Activated T-helper 1 cell treated with anti-CD3 and anti-CD28 coated beads, Interleukin-12 subunit alpha, Interleukin-12 subunit beta, Interleukin-2, Interleukin-4 antibody, amounts not matched to agents 30 ng/mL and 10 ng/mL and 1 ng/mL, durations not matched to agents 14 hours and 24 hours and 36 hours (primary cell): ENCODE measurements at regions of chr3 and their contacts with region 1.

Region 1: DNA sequence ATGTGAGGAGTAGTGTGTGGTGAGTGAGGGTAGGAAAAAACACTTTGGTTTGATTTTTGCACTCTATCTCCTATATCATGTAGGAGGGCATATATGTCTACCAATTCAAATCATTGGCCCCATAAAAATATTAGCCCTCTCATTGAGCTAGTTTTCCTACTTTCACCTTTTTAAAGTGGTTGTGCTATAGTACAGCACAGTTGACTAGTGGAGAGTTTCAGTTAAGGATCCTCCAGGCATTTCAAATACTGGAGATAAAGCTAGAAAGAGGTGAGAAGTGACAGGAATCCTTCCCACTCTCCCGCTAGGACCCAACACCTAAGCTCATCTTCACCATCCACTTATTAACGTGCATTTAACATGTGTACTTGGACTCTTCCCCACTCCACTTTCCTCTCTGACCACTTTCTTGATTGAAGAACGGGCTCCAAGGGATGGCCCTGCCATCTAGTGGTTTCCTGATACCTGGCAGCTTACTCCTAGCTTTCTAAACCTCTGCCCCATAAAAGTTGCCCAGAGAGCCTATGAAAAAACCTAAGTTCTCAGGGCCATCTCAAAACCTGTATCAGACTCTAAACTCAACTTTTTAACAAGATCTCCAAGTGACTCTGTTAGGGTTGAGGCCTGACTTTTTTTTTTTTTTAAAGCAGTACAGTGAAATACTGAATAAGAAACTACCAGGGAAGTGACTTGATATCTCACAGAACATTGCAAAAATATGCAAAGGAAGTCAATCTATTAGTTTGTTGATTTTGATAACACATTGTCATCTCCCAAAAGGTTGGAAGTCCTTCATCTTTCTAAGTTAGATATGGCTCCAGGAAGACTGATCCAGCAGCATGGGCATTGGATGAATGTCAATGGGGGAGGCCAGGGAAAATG is 17.9 kb downstream of the IL12A start:
- DNase-seq: no peak
- H3K4me3 Mint-ChIP-seq: no peak overlapping the region
- H3K27ac Mint-ChIP-seq: no peak overlapping the region
- H3K4me1 Mint-ChIP-seq: peaks cover 42% of the 10 kb centered on the region
- H3K27me3 Mint-ChIP-seq: no peaks in the 10 kb centered on the region

Region 2: GRCh38 chr3:159158213-159158612 is 848.3 kb before region 1 on chr3:
- intact Hi-C with region 1: no loop called
- DNase-seq: no peak
- H3K4me3 Mint-ChIP-seq: no peak overlapping the region
- H3K27ac Mint-ChIP-seq: no peak overlapping the region
- H3K4me1 Mint-ChIP-seq: no peaks in the 10 kb centered on the region
- H3K27me3 Mint-ChIP-seq: no peaks in the 10 kb centered on the region

Region 3: DNA sequence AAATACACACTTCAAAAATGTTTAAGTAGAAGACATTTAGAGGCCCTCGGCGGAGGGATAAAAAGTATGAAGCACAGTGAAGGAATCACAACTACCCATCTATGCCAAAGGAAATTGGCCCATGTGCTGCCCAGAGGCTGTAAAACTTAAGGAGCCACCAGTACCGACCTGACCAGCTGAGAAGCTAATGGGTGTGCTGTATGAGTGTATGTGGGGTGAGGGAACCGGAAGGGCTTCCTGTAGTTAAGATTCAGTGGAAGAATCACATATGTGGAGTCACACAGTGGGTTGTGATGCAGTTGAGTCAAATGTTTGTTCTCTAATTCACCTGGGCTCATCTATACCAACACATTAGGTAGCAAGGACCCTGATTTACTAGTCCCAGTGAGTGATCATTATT is 533.9 kb before region 1 on chr3:
- intact Hi-C with region 1: no loop called
- DNase-seq: no peak
- H3K4me3 Mint-ChIP-seq: no peak overlapping the region
- H3K27ac Mint-ChIP-seq: no peak overlapping the region
- H3K4me1 Mint-ChIP-seq: no peaks in the 10 kb centered on the region
- H3K27me3 Mint-ChIP-seq: no peaks in the 10 kb centered on the region

Region 4: DNA sequence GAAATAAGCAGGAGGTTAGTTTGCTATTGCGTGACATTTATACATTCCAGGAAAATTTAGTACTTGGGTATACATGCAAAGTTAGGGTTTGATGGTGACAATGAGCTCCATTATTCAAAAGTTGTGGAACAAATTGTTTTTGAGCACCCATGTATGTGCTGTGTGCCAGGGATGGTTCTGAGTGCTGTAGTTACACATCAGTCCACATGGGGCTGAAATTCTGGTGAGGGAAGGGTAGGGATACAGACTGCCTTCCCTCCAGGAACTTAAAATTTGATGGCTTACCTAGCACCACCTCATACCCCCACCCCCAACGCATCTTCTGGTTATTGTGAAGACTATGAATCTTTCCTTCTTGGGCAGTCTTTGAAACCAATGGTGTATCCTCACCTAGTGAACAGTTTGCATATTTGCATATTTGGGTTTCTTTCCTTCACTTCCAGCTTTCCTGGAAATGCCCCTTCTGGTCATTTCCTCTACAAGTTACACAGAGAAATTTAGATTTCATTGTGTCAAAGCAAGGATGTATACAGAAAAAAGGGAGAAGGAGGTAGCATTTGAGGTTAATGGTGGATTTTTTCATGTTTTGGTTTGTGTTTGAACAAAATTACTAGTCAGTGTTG is 239.8 kb before region 1 on chr3:
- intact Hi-C with region 1: no loop called
- DNase-seq: no peak
- H3K4me3 Mint-ChIP-seq: no peak overlapping the region
- H3K27ac Mint-ChIP-seq: no peak overlapping the region
- H3K4me1 Mint-ChIP-seq: peaks cover 10% of the 10 kb centered on the region
- H3K27me3 Mint-ChIP-seq: peaks cover 61% of the 10 kb centered on the region

Region 5: DNA sequence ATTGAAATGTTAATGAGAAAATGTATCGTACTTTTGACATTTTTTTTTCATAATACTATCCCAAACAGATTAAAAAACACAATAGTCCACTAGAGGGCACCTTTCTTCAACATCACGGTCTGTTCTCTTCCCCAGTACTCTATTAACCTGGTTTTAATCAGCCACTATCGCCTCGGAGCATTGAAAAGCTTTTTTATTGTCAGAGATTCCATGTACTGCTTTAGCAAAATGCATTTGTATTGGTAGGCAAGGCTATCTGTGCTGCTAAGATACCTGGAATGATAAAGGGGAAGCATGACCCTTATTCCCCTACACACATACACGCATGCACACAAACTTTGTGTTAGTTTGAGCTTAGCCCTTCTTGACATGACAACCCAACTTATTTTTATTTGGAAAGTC is 178.0 kb before region 1 on chr3:
- intact Hi-C with region 1: loop called (anchors 1 kb)
- DNase-seq: no peak
- H3K4me3 Mint-ChIP-seq: no peak overlapping the region
- H3K27ac Mint-ChIP-seq: no peak overlapping the region
- H3K4me1 Mint-ChIP-seq: no peaks in the 10 kb centered on the region
- H3K27me3 Mint-ChIP-seq: peaks cover 2% of the 10 kb centered on the region

Region 6: GRCh38 chr3:159854500-159855124 is 151.9 kb before region 1 on chr3:
- intact Hi-C with region 1: no loop called
- DNase-seq: no peak
- H3K4me3 Mint-ChIP-seq: no peak overlapping the region
- H3K27ac Mint-ChIP-seq: no peak overlapping the region
- H3K4me1 Mint-ChIP-seq: no peaks in the 10 kb centered on the region
- H3K27me3 Mint-ChIP-seq: peaks cover 22% of the 10 kb centered on the region